ENCODE measurements at regions of chrX and their contacts with region 1.

Region 1: DNA sequence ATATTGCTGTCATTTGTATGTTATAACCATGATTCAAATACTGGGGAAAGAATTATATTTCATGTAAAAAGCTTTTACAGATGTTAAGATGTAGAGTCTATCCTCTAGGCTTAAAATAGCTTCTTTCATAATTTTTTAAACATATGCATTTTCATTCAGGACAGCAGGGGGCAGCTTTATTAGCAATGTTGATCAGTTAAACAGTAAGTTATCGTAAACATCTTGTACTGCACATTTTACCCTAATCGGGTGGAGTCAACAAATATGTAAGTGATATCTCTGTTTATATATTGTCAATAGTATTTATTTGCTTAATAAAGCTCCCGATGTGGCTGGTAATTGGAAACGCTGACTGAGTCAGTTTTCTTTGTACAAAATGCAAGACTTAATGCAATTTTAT is 142.5 kb upstream of the MED14 start:
- DNase-seq: peak; percentile 61
- ATAC-seq: peak; percentile 40
- H3K4me3 ChIP-seq: peak overlapping the region; percentile 58
- H3K27ac ChIP-seq: no peak overlapping the region
- H3K4me1 ChIP-seq: peaks cover 5% of the 10 kb centered on the region
- H3K27me3 ChIP-seq: no peaks in the 10 kb centered on the region
- CTCF ChIP-seq: peak; percentile 72

Region 2: DNA sequence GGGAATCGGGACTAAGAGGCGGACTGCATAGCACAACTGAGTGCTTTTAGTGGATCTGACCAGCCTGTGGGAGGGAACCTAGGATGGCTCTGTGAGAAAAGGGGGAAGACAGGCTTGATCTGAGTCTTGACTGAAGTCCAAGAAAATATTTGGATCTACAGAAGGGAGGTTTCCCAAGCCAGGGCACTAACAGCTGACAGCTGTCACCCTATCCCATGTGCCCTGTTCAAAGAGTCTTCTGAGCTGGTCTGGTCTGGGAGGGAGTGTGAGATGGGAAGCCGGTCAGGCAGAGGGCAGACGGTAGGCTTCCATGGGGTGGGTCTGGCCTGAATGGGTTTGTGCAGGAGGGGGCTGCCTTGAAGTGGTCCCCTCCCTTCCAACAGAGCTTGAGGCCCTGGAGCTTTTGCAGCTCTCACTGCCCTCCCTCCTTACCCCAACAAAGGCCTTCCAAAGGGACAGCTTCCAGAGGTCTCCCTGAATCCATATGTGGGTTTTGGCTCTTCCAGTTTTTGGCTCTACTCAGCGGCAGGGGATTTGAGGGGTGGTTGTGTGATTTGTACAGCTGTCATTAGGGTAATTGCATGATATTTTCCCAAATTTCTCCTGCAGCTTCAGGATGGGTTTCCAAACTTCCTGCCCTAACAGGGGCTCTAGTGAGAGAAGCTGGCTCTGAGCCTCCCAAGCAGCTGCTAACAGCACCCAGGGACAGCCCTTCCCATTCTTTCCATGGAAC is 1423.8 kb before region 1 on chrX:
- CTCF ChIA-PET with region 1: no interaction called
- POLR2A ChIA-PET with region 1: no interaction called
- intact Hi-C with region 1: no loop called
- DNase-seq: no peak
- ATAC-seq: no peak
- H3K4me3 ChIP-seq: no peak overlapping the region
- H3K27ac ChIP-seq: no peak overlapping the region
- H3K4me1 ChIP-seq: no peaks in the 10 kb centered on the region
- H3K27me3 ChIP-seq: 0 out of 2 replicates have a peak, but pooled peaks cover 5% of the 10 kb centered on the region
- CTCF ChIP-seq: no peak

Region 3: DNA sequence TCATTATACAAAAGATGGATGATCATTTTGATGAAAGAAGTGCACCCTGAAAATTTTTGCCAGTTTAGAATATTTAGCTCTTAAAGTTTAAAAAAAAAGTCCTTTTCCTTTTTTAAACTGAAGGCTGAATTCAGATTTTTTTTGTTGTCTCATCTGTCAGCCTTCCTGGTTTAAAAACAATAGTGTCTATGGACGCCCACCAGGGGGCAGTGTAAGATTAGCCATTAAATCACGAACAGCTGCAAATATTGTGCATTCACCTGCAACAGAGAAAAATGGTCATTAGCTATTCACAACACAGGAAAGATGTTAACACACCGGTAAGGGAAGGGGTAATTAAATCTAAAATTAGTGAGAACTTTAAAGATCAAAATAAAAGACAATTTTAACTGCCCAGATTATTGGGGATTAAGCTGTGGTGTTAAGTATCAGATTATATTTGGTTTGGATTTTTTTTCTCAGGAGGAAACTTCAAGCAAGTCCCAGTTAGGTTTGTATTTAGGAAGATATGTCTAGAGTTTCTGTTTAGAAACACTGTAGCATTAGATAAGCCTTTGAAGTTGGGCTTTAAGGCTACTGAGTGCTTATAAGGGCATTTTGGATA is 226.2 kb before region 1 on chrX:
- CTCF ChIA-PET with region 1: interaction called, 7 read pairs
- POLR2A ChIA-PET with region 1: no interaction called
- intact Hi-C with region 1: loop called (anchors 2 kb)
- DNase-seq: peak; percentile 69
- ATAC-seq: no peak
- H3K4me3 ChIP-seq: no peak overlapping the region
- H3K27ac ChIP-seq: no peak overlapping the region
- H3K4me1 ChIP-seq: no peaks in the 10 kb centered on the region
- H3K27me3 ChIP-seq: no peaks in the 10 kb centered on the region
- CTCF ChIP-seq: peak; percentile 82

Region 4: DNA sequence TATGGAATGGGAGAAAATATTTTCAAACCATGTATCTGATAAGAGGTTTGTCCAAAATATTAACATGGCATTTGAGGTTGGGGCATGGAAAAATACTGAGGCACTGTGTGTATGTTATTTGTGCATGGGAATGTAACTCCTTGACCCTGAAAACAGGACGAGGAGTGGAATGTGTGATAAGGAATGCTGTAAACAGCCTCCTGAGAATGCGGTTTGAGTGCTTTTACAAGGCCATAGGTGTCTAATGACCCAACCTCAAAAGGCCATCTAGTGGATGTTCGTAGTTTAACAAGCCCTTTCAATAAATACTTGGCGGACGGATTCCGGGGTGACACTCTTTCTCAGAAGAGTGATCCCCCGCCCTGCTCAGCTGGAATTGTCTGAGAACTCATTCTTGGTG is 44.4 kb after region 1 on chrX:
- CTCF ChIA-PET with region 1: interaction called, 3 read pairs
- POLR2A ChIA-PET with region 1: no interaction called
- intact Hi-C with region 1: loop called (anchors 1 kb)
- DNase-seq: peak; percentile 81
- ATAC-seq: peak; percentile 55
- H3K4me3 ChIP-seq: peak overlapping the region; percentile 35; the same call in 1 of the 2 replicates
- H3K27ac ChIP-seq: no peak overlapping the region
- H3K4me1 ChIP-seq: peaks cover 15% of the 10 kb centered on the region
- H3K27me3 ChIP-seq: no peaks in the 10 kb centered on the region
- CTCF ChIP-seq: peak; percentile 68

Region 5: DNA sequence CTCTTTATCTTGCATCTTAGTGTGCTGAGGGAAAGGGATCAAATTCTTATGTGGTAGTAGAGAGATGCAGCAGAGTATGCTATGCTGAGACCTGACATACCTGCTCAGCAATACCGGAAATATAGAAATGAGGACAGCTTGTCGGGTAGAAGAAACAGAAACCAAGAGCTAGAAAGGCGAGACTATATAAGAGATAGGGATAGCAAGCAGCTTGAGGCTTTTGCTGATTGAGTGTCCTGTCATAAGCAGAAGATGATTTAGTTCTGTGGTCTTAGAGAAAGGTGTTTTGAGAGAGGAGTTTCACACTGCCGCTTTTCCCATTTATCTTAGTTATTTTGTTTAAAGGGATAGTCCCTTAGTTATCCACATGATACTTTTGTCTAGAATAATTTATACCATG is 239.1 kb after region 1 on chrX:
- CTCF ChIA-PET with region 1: interaction called, 11 read pairs
- POLR2A ChIA-PET with region 1: no interaction called
- intact Hi-C with region 1: loop called (anchors 1 kb)
- DNase-seq: peak; percentile 4
- ATAC-seq: 0 out of 2 replicates have a peak, but pooled peaks have one; percentile 33
- H3K4me3 ChIP-seq: no peak overlapping the region
- H3K27ac ChIP-seq: no peak overlapping the region
- H3K4me1 ChIP-seq: peaks cover 24% of the 10 kb centered on the region
- H3K27me3 ChIP-seq: no peaks in the 10 kb centered on the region
- CTCF ChIP-seq: no peak

Measured in PC-3 (cell line).